Left colon (tissue), 2 donors: ENCODE measurements at regions of chrX and their contacts with region 1.

Region 1: DNA sequence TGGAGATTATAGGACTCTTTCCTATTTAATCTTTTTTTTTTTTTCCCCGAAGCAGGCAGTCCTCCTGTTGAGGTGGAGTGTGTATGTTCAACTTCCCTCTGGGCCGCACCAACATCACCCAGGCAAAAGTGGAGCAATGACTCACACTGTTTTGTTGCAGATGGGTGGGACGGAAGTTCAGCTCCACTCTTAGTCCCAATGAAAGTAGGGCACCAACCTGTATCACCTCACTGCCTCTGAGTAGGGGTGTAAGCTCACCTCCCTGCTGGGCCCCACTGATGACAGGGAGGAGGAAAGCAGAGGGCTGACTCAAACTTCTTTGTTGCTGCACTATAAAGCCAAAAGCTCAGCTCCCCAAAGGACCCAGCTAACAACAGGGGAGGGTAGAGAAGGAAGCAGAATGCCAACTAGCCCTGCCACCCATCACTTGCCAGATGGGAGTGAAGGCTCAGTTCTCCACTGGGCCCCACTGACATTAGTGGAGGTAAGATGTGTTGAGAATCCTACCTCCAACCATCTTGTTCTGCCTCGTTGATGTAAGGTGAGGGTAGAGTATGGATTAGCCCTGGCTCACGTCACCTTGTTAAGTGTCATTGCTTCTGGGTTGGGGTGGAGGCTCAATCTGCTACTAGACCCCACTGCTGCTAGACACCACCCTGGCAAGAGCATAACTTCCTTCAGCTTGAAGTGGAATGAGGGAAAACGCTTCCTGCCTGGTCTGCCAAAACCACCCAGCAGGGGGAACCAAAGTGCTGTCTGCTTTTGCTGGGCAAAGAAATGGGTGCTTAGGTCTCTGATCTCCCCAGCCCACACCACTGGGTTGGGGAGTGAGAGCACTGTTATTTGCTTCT is 14.1 kb downstream of the RPS6KA3 start:
- DNase-seq: peak; percentile 41 to 79
- ATAC-seq: peak; percentile 89

Region 2: DNA sequence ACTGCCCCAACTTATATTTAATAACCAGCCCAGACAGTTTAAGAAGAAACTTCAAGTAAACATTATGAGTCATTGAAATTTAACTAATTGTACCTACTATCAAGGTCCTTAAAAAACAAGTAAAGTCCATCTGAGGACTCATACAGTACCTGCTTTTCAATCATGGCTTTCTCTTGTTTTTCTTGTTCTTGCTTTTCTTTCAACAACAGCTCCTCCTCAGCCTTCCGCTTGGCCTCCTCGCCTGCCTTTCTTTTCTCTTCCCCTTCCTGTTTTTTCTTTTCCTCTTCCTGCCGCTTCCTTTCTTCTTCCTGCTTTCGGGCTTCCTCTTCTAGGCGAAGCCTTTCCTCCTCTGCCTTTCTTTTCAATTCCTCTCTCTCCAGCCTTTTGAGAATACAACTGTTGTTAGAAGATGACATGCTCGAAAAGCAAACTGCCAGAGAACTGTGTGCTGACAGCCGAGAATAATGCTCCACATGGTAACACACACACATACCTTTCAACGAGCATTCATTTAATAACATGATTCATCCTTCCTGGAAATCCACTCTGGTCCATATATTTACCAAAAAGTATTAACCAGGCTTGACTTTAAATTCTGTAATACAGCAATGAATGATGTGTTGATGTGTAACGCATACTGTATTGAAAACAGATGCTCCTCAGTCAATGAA is 236.5 kb before region 1 on chrX:
- intact Hi-C with region 1: no loop called
- DNase-seq: no peak
- ATAC-seq: no peak

Region 3: DNA sequence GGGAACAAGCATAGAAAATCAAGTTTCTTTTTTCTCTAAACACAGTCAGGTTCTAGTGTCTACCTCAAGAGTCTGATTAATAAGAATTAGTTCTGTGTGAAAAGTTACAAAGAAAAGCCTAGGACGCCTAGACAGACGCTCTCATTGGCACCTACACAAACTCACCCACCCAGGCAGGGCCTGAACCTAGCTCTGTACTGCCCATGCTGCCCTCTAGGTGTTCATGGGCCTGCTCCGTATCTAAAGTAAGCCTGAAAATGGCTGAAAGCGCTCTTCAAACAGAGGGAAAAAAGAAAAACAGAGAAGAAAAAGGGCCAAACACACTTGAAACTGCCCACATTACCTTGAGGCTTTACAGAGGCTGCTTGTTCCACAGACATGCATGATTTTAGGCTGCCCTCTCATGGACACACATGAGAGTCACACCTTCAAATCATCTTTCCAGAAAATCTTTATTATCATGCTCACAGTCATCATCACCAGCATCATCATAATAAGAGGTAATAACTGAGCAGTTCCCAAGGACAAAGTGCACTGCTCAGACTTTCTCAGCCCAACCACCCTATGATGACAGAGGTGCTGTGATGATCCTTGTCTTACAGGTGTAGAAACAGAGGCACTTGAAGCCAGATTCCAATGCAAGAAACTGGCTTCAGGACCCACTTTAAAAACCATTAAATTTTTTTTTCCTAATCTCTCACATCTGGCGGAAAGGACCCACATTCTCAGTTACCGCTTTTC is 185.5 kb before region 1 on chrX:
- intact Hi-C with region 1: no loop called
- DNase-seq: no peak
- ATAC-seq: peak; percentile 91

Region 4: GRCh38 chrX:20266810-20267606 is 14.4 kb after region 1 on chrX and contains the start of gene RPS6KA3:
- intact Hi-C with region 1: no loop called
- DNase-seq: peak; percentile 91 to 92
- ATAC-seq: peak; percentile 89
- total RNA-seq, gene RPS6KA3: 88.6 to 93.7 TPM

Region 5: DNA sequence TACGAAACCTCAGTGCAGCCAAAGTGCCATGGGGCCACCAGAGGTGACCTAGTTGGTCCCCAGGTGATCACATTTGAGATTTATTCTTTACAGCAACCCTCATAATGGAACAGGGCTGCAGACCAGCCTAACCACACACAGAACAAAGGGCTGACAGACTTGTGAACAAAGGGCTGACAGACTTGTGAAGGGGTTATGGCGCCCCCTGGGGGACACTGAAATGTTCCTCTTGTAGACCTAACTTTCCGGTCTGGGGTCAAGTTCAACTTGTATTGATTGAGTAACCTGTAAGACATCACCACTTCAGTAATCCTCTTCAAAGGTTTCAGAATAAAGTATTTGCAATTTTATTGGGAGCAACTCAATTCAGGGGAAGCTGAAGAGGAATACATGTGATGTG is 190.0 kb after region 1 on chrX:
- intact Hi-C with region 1: loop called in 1 of 2 experiments (anchors 10 kb)
- DNase-seq: peak; percentile 73 to 95
- ATAC-seq: peak; percentile 76